ENCODE measurements at regions of chr20 and their contacts with region 1.

Region 1: DNA sequence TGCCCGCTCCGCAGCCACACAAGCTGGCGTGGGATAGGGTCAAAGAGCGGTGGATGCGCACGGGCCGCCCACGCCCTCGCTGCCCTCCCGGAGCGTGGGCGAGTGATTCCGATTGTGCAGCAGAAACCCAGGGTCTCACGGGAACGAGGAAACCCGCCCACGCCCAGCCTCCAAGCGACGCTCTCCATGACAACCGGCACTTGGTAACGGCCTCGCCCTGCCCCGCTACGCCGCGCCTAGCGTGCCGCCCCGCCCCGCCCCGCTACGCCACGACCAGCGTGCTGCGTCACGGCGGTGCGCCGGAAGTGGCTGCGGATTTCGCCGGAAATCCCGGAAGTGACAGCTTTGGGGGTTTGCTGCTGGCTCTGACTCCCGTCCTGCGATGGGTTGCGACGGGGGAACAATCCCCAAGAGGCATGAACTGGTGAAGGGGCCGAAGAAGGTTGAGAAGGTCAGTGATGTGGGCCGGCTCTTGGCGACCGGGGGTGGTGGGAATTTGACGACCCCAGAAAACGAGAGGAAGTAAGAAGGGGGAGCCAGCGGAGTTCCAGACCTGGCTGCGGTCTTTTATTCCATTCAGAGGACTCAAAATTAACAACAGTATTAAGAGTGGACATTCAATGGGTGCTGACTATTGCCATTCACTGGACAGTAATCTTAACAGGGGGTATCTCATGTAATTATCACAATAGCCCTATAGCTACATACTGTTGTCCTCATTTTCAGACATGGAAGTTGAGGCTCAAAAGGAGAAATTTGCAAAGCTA is at the start of gene RTF2:
- DNase-seq: peak; percentile 94
- H3K4me3 ChIP-seq: peak within 1 kb of the TSS; percentile 97
- H3K27ac ChIP-seq: peak within 1 kb of the TSS; percentile 27
- H3K4me1 ChIP-seq: peaks cover 33% of the 10 kb centered on the region
- CTCF ChIP-seq: no peak
- total RNA-seq, gene RTF2: 46.8 and 63.6 TPM in 2 replicates

Region 2: GRCh38 chr20:55952967-55953600 is 515.4 kb before region 1 on chr20:
- CTCF ChIA-PET with region 1: no interaction called
- POLR2A ChIA-PET with region 1: no interaction called
- intact Hi-C with region 1: no loop called
- DNase-seq: no peak
- H3K4me3 ChIP-seq: no peak overlapping the region
- H3K27ac ChIP-seq: no peak overlapping the region
- H3K4me1 ChIP-seq: no peaks in the 10 kb centered on the region
- CTCF ChIP-seq: no peak

Region 3: DNA sequence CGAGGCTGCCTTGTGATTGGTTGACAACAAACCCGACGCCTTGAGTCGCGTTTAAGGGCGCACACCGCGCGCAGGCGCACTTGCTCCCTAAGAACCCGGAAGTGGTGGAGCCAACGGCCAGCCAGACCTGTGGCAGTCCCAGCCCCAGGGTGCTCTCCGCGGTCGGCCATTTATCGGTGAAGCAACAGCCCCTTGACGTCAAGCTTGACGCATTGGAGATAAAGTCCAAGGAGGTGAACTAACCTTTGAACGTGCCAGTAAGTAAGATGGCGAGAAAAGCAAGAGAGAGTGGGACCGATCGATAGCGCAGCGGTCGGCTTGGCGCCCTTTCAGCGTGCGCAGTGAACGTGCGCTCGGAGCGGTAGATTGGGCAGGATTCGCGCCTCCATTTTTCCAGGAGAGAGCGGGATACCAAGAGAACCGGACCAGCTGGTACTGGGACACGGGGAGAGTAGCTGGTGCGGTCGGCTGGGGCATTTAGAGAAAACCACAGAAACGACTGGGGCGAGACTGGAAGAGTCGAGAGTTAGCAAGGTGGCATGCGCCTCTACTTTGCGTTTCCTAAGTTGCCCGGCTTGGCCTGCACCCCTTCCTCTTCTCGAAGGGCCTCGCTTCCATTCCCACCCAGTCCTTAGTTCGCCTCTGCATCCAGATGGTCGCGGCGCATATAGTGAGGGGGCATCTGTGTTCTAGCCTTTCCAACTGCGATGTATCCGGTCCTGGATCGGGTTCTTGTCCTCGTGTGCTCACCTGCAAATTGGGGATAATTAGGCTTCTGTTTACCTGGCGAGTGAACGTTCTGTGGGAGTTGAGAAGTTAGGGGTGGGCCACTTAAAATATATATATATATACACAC is 76.0 kb before region 1 on chr20 and contains the start of gene CSTF1:
- CTCF ChIA-PET with region 1: no interaction called
- POLR2A ChIA-PET with region 1: interaction called, 15 read pairs
- intact Hi-C with region 1: loop called (anchors 2 kb)
- DNase-seq: peak; percentile 99
- H3K4me3 ChIP-seq: peak within 1 kb of the TSS; percentile 76
- H3K27ac ChIP-seq: peak within 1 kb of the TSS; percentile 85
- H3K4me1 ChIP-seq: peaks cover 21% of the 10 kb centered on the region
- CTCF ChIP-seq: no peak
- total RNA-seq, gene CSTF1: 38.5 and 52.1 TPM in 2 replicates

Region 4: DNA sequence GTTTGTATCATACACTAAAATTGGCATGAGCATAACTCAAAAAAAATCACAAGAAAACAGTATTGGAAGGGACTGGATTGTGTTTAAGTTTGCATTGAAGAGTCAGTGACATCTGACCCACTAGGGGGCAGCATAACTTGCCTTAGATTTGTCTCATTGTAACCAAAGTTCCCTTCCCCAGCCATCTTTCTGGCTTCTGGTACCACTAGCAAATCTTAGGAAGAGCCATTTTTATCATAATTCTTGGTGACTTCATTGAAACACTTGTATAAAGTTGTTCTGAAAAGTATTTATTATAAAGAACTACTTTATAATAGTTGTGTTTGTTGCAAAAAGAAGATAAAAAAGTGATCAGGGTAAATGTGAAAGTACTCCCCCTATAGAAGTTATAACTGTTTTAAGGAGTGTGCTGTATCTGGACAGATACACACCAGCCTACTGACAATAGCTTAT is 68.4 kb before region 1 on chr20:
- CTCF ChIA-PET with region 1: no interaction called
- POLR2A ChIA-PET with region 1: no interaction called
- intact Hi-C with region 1: loop called (anchors 1 kb)
- DNase-seq: peak; percentile 66
- H3K4me3 ChIP-seq: no peak overlapping the region
- H3K27ac ChIP-seq: no peak overlapping the region
- H3K4me1 ChIP-seq: no peaks in the 10 kb centered on the region
- CTCF ChIP-seq: peak; percentile 97